ENCODE measurements at regions of chr6 and their contacts with region 1.

Region 1: DNA sequence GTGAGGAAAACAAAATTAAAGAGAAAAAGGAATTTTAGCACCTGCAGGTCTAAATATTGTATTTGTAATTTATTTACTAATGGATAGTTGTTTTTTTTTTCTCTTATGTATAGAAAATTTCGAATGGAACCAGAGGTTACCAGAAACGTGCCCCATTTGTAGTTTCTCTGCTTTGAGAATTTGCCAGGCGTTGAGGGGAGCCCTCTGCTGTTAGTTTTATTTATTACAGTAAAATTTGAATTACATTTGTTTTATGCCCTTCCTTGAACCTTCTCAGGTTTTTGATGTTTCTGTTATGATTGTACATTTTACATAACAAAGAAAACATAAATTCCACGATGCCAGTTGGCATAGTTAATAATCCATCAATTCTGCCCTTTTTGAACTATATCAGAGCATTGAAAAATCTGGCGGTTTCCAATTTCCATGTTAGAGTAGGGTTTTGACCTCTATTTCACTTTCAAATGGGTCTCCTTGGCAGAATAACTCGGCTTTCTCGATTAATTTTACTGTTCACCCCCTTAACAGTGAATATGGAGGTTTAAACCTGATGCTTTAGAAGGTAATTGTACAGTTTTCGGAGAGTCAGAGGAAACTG is 35.1 kb upstream of the RFPL4B start:
- DNase-seq: no peak
- H3K4me3 ChIP-seq: no peak overlapping the region
- CTCF ChIP-seq: peak; percentile 26

Region 2: DNA sequence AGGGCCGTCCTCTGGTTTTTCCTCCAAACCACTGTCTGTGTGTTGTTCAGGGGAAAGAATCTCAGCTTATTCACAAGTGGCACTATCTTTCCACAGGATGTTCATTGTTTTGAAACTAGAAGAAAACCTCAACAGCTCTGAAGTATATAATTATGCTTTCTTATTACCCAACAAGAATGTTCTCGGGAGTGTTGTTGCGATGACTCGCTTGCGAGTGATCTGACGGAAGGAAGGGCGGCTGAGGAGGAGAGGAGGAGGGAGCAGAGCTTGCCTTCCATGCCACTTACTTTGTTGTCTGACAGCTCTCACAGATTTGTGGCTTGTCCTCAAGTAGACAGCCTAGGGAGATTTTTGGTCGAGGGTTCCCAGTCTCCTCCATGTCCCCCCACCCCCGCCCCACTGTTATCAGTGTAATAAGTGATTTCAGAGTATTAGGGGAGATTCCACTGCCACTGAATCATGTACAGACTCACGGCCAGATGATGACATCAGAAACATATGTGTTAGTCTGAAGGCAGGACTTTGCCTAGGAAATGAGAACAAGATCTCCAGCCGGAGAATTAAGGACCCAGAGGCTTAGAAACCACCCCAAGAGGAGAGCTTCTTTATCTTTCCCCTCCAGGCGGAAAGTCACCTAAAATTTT is 338.8 kb before region 1 on chr6:
- CTCF ChIA-PET with region 1: no interaction called
- POLR2A ChIA-PET with region 1: no interaction called
- DNase-seq: peak; percentile 92
- H3K4me3 ChIP-seq: peak overlapping the region; percentile 36
- CTCF ChIP-seq: no peak

Region 3: GRCh38 chr6:112173221-112173804 is 138.7 kb before region 1 on chr6:
- CTCF ChIA-PET with region 1: interaction called, 215 read pairs
- POLR2A ChIA-PET with region 1: no interaction called
- DNase-seq: no peak
- H3K4me3 ChIP-seq: no peak overlapping the region
- CTCF ChIP-seq: no peak

Region 4: GRCh38 chr6:112188906-112189305 is 123.1 kb before region 1 on chr6:
- CTCF ChIA-PET with region 1: interaction called, 18 read pairs
- POLR2A ChIA-PET with region 1: no interaction called
- DNase-seq: peak; percentile 21
- H3K4me3 ChIP-seq: no peak overlapping the region
- CTCF ChIP-seq: no peak

Region 5: GRCh38 chr6:112296122-112296521 is 15.9 kb before region 1 on chr6:
- CTCF ChIA-PET with region 1: interaction called, 39 read pairs
- POLR2A ChIA-PET with region 1: no interaction called
- DNase-seq: no peak
- H3K4me3 ChIP-seq: no peak overlapping the region
- CTCF ChIP-seq: peak; percentile 65

Measured in AG04449 (cell line).